ENCODE measurements at regions of chr11 and their contacts with region 1.

Region 1: GRCh38 chr11:18768472-18768901 is 23.1 kb downstream of the PTPN5 start:
- DNase-seq: peak; percentile 66
- ATAC-seq: peak; percentile 75
- H3K4me3 Mint-ChIP-seq: no peak overlapping the region
- H3K27ac Mint-ChIP-seq: peak overlapping the region; percentile 51
- H3K4me1 Mint-ChIP-seq: peaks cover 42% of the 10 kb centered on the region
- H3K27me3 Mint-ChIP-seq: peaks cover 13% of the 10 kb centered on the region

Region 2: GRCh38 chr11:18115360-18116127 is 652.9 kb before region 1 on chr11:
- CTCF ChIA-PET with region 1: interaction called, 12 read pairs
- DNase-seq: peak; percentile 77
- ATAC-seq: peak; percentile 95
- H3K4me3 Mint-ChIP-seq: no peak overlapping the region
- H3K27ac Mint-ChIP-seq: no peak overlapping the region
- H3K4me1 Mint-ChIP-seq: peaks cover 4% of the 10 kb centered on the region
- H3K27me3 Mint-ChIP-seq: peaks cover 27% of the 10 kb centered on the region

Region 3: GRCh38 chr11:18526521-18527296 is 241.8 kb before region 1 on chr11 and contains the start of gene TSG101:
- CTCF ChIA-PET with region 1: interaction called, 12 read pairs
- DNase-seq: peak; percentile 94
- ATAC-seq: peak; percentile 89
- H3K4me3 Mint-ChIP-seq: peak within 1 kb of the TSS; percentile 97
- H3K27ac Mint-ChIP-seq: peak within 1 kb of the TSS; percentile 100
- H3K4me1 Mint-ChIP-seq: peaks cover 38% of the 10 kb centered on the region
- H3K27me3 Mint-ChIP-seq: peaks cover 3% of the 10 kb centered on the region
- total RNA-seq, gene TSG101: 30.5 to 42.2 TPM

Region 4: DNA sequence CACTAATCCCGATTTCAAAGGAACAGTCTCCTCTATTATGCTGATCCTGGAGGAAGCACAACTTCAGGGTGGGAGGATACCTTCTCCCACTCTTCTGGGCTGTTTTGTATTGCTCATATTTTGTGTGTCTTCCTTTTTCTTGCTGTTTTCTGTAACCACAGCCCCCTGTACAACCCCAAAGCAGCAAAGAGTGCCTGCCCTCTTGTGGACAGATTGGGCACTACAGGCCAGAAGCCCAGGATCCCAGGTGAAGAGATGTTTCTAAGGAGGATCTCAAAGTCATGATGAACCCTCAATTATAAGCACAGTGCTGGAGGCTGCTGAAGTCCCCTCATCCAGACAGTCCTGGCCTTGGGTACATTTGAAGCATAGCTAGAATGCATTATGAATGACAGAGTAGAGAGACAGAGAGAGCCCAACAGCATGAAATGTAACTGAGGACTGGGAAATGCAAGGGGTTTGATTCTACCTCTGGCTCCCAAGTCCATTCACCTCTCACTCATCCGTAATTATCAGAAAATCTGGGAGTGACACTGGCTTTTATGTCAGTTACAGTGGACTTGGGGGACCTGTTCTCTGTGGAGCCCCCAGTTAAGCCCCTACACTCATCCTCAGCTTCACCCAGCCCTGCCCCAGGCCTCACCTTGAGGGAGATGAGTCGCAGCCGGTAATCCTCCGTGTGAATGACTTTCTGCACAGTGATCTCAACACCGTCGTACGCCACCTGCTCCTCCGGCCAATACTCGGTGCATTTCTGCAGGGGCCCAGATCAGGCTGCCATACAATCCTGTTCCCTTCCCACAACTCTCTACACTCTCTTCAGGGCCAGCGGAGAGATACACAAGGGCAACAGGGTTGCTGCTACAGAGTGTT is 36.3 kb before region 1 on chr11:
- CTCF ChIA-PET with region 1: interaction called, 24 read pairs
- DNase-seq: peak; percentile 72
- ATAC-seq: peak; percentile 77
- H3K4me3 Mint-ChIP-seq: no peak overlapping the region
- H3K27ac Mint-ChIP-seq: no peak overlapping the region
- H3K4me1 Mint-ChIP-seq: peaks cover 5% of the 10 kb centered on the region
- H3K27me3 Mint-ChIP-seq: no peaks in the 10 kb centered on the region

Region 5: GRCh38 chr11:18741783-18742182 is 26.7 kb before region 1 on chr11:
- CTCF ChIA-PET with region 1: interaction called, 11 read pairs
- DNase-seq: no peak
- ATAC-seq: no peak
- H3K4me3 Mint-ChIP-seq: no peak overlapping the region
- H3K27ac Mint-ChIP-seq: no peak overlapping the region
- H3K4me1 Mint-ChIP-seq: peaks cover 4% of the 10 kb centered on the region
- H3K27me3 Mint-ChIP-seq: no peaks in the 10 kb centered on the region

Measured in activated CD8-positive, alpha-beta memory T cell treated with anti-CD3 and anti-CD28 coated beads, Interleukin-2, amount 10 ng/mL, durations not matched to agents 7 days and 5 days (primary cell).